H1 (cell line): ENCODE measurements at regions of chr1 and their contacts with region 1.

Region 1: DNA sequence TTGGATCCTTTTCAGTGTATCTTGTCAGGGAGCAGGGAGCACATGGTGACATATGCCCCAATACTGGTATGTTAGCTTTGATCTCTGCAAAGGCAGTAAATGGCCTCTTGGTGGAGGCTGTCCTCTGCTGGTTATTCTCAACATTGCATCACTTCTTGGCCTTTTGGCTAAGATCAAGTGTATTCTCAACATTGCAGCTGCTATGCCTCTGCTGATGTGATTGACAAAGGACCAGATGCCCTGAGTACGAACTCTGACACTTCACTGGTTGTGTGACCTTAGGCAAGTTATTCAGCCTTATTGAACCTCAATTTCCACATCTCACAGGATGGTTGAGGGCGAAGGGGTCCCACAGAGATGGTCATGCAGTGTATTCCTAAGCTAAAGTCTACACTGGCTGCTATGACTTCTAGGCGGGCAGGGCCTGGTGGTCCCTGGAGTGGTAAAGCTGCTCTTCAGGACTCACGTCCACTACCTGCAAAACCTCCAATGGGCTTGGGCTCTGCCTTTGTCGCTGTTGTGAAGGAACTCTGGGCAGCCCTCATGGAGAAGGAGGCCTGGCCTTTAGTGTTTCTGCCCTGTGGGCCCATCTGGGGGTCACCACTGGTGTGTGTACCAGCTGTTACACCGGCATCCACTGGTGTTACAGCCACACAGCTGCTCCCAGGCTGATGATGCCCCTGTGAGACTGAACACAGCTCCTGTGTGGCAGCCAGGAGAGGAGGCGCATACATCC is 64.8 kb downstream of the DNTTIP2 start:
- DNase-seq: peak in 1 of 2 experiments; percentile 67
- H3K4me3 ChIP-seq: no peak overlapping the region
- H3K27ac ChIP-seq: no peak overlapping the region
- H3K4me1 ChIP-seq: peaks cover 6 to 17% (median 7%) of the 10 kb centered on the region in 4 experiments; a peak in 6 of 7 replicates
- H3K27me3 ChIP-seq: no peaks in the 10 kb centered on the region
- CTCF ChIP-seq: peak in 2 of 3 experiments; percentile 97 to 99; a peak in 3 of 4 replicates
- EP300 ChIP-seq: no peak
- POLR2A ChIP-seq: no peak
- RAD21 ChIP-seq: peak; percentile 100

Region 2: GRCh38 chr1:93615582-93616150 is 198.6 kb before region 1 on chr1:
- CTCF ChIA-PET with region 1: interaction called, 620 read pairs
- POLR2A ChIA-PET with region 1: interaction called, 3 read pairs
- DNase-seq: no peak
- H3K4me3 ChIP-seq: peak overlapping the region in 1 of 4 experiments; percentile 11; a peak in 2 of 8 replicates
- H3K27ac ChIP-seq: 0 out of 2 replicates have a peak overlapping the region, but pooled peaks have one; percentile 13
- H3K4me1 ChIP-seq: peaks cover 19 to 36% (median 25%) of the 10 kb centered on the region in 4 experiments
- H3K27me3 ChIP-seq: no peaks in the 10 kb centered on the region
- CTCF ChIP-seq: no peak
- EP300 ChIP-seq: no peak
- POLR2A ChIP-seq: no peak
- RAD21 ChIP-seq: no peak

Region 3: GRCh38 chr1:93672069-93672468 is 142.2 kb before region 1 on chr1:
- CTCF ChIA-PET with region 1: interaction called, 39 read pairs
- POLR2A ChIA-PET with region 1: interaction called, 3 read pairs
- DNase-seq: no peak
- H3K4me3 ChIP-seq: no peak overlapping the region
- H3K27ac ChIP-seq: no peak overlapping the region
- H3K4me1 ChIP-seq: peaks cover 0 to 2% (median 2%) of the 10 kb centered on the region in 4 experiments; a peak in 4 of 7 replicates
- H3K27me3 ChIP-seq: no peaks in the 10 kb centered on the region
- CTCF ChIP-seq: no peak
- EP300 ChIP-seq: no peak
- POLR2A ChIP-seq: no peak
- RAD21 ChIP-seq: no peak

Region 4: GRCh38 chr1:93722081-93723031 is 91.9 kb before region 1 on chr1:
- CTCF ChIA-PET with region 1: interaction called, 35 read pairs
- POLR2A ChIA-PET with region 1: no interaction called
- DNase-seq: no peak
- H3K4me3 ChIP-seq: no peak overlapping the region
- H3K27ac ChIP-seq: no peak overlapping the region
- H3K4me1 ChIP-seq: peaks cover 0 to 12% (median 4%) of the 10 kb centered on the region in 4 experiments; a peak in 6 of 7 replicates
- H3K27me3 ChIP-seq: no peaks in the 10 kb centered on the region; a peak in 1 of 7 replicates
- CTCF ChIP-seq: no peak
- EP300 ChIP-seq: no peak
- POLR2A ChIP-seq: no peak
- RAD21 ChIP-seq: no peak; a peak in 1 of 4 replicates

Region 5: GRCh38 chr1:93784538-93784937 is 29.7 kb before region 1 on chr1:
- CTCF ChIA-PET with region 1: interaction called, 25 read pairs
- POLR2A ChIA-PET with region 1: no interaction called
- DNase-seq: no peak
- H3K4me3 ChIP-seq: no peak overlapping the region
- H3K27ac ChIP-seq: no peak overlapping the region
- H3K4me1 ChIP-seq: peaks cover 0 to 4% (median 1%) of the 10 kb centered on the region in 4 experiments; a peak in 1 of 7 replicates
- H3K27me3 ChIP-seq: no peaks in the 10 kb centered on the region
- CTCF ChIP-seq: no peak
- EP300 ChIP-seq: no peak
- POLR2A ChIP-seq: no peak
- RAD21 ChIP-seq: no peak

Region 6: GRCh38 chr1:93846211-93846991 is 32.2 kb after region 1 on chr1:
- CTCF ChIA-PET with region 1: interaction called, 266 read pairs
- POLR2A ChIA-PET with region 1: interaction called, 6 read pairs
- DNase-seq: peak in 1 of 2 experiments; percentile 91
- H3K4me3 ChIP-seq: peak overlapping the region; percentile 73 to 93 (median 82)
- H3K27ac ChIP-seq: no peak overlapping the region
- H3K4me1 ChIP-seq: peaks cover 0 to 7% (median 2%) of the 10 kb centered on the region in 4 experiments; a peak in 2 of 7 replicates
- H3K27me3 ChIP-seq: no peaks in the 10 kb centered on the region; a peak in 1 of 7 replicates
- CTCF ChIP-seq: peak; percentile 13 to 27 (median 26); a peak in 3 of 4 replicates
- EP300 ChIP-seq: no peak
- POLR2A ChIP-seq: peak in 1 of 2 experiments; percentile 68; a peak in 2 of 3 replicates
- RAD21 ChIP-seq: peak in 1 of 2 experiments; percentile 23; a peak in 2 of 4 replicates

Region 7: GRCh38 chr1:93865253-93865652 is 51.0 kb after region 1 on chr1:
- CTCF ChIA-PET with region 1: no interaction called
- POLR2A ChIA-PET with region 1: no interaction called
- DNase-seq: no peak
- H3K4me3 ChIP-seq: no peak overlapping the region
- H3K27ac ChIP-seq: no peak overlapping the region
- H3K4me1 ChIP-seq: no peaks in the 10 kb centered on the region
- H3K27me3 ChIP-seq: no peaks in the 10 kb centered on the region
- CTCF ChIP-seq: no peak
- EP300 ChIP-seq: no peak
- POLR2A ChIP-seq: no peak
- RAD21 ChIP-seq: no peak